ENCODE measurements at regions of chr17 and their contacts with region 1.

Region 1: GRCh38 chr17:55527540-55528118 is 16.4 kb upstream of the SMIM36 start:
- DNase-seq: peak in 2 of 4 experiments; percentile 29 to 57
- ATAC-seq: peak; percentile 86
- H3K4me3 ChIP-seq: no peak overlapping the region
- H3K27ac ChIP-seq: no peak overlapping the region
- H3K4me1 ChIP-seq: no peaks in the 10 kb centered on the region
- H3K27me3 ChIP-seq: no peaks in the 10 kb centered on the region
- CTCF ChIP-seq: peak; percentile 62 to 86 (median 66)
- EP300 ChIP-seq: no peak
- POLR2A ChIP-seq: no peak
- RAD21 ChIP-seq: peak; percentile 95

Region 2: DNA sequence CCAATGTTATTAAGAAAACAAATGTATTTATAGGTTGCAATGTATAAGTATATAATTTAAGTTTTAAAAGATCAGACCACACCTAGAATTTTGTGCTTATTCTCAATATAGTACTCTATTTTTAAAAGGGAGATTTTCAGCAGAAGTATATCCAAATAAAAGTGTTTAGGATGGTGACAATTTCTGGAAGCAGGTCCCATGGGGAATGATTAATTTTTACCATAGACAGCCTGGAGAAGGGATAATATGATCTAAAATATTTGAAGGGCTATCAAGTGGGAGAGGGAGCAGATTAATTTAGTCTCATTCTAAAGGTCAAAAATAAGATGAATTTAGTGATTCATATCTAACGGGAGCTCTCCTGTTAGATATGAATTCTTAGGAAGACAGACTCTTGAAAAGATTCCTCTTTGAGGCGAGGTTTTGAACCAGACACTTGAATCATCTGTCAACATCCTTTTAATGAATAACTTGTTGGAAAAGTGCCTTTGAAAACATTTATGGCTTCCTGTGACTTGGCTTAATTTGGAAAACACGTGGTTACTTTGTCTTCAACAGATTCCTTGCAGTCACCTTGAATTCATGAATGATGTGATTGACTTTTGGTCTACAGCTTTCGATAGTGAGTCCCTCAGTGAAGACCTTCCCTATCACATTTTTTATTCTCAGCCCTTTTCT is 12.9 kb after region 1 on chr17:
- CTCF ChIA-PET with region 1: no interaction called
- POLR2A ChIA-PET with region 1: no interaction called
- in situ Hi-C with region 1: no loop called
- intact Hi-C with region 1: no loop called
- DNase-seq: no peak
- ATAC-seq: no peak
- H3K4me3 ChIP-seq: no peak overlapping the region
- H3K27ac ChIP-seq: no peak overlapping the region
- H3K4me1 ChIP-seq: no peaks in the 10 kb centered on the region
- H3K27me3 ChIP-seq: no peaks in the 10 kb centered on the region
- CTCF ChIP-seq: no peak
- EP300 ChIP-seq: no peak
- POLR2A ChIP-seq: no peak
- RAD21 ChIP-seq: no peak

Region 3: DNA sequence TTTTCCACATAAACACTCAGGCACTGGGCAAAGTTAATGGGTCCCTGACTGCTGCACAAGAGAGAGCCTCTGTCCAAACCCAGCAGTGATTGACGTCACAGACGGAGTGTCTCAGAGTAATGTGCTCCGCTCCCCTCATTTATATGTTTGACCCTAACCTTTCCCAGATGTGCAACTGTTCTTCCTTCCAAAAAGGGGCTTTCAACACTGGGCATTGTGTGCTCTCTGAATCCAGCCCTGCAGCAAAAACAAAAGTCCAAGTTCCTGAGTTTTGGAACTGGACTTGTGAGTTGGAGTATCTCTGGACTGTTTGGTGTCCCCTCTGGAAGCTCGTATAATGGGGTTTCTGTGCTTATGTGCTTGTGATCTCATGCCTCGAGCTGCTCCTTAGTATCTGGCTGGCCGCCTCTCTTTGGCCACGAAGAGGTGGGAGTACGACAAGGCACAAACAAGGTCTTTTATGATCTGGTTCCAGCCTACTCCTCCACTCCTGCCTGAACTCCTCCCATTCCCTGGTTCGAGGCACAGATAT is 60.0 kb after region 1 on chr17:
- CTCF ChIA-PET with region 1: interaction called, 5 read pairs
- POLR2A ChIA-PET with region 1: no interaction called
- in situ Hi-C with region 1: no loop called
- intact Hi-C with region 1: loop called (anchors 1 kb)
- DNase-seq: no peak
- ATAC-seq: peak; percentile 62
- H3K4me3 ChIP-seq: no peak overlapping the region
- H3K27ac ChIP-seq: no peak overlapping the region
- H3K4me1 ChIP-seq: no peaks in the 10 kb centered on the region; a peak in 2 of 5 replicates
- H3K27me3 ChIP-seq: no peaks in the 10 kb centered on the region
- CTCF ChIP-seq: no peak
- EP300 ChIP-seq: no peak
- POLR2A ChIP-seq: no peak
- RAD21 ChIP-seq: no peak

Region 4: GRCh38 chr17:55641676-55642081 is 114.0 kb after region 1 on chr17:
- CTCF ChIA-PET with region 1: interaction called, 17 read pairs
- POLR2A ChIA-PET with region 1: interaction called, 3 read pairs
- in situ Hi-C with region 1: no loop called
- intact Hi-C with region 1: loop called (anchors 2 kb)
- DNase-seq: peak; percentile 17 to 70 (median 24)
- ATAC-seq: peak; percentile 92
- H3K4me3 ChIP-seq: no peak overlapping the region
- H3K27ac ChIP-seq: no peak overlapping the region
- H3K4me1 ChIP-seq: peaks cover 0 to 4% of the 10 kb centered on the region in 2 experiments; a peak in 2 of 5 replicates
- H3K27me3 ChIP-seq: no peaks in the 10 kb centered on the region
- CTCF ChIP-seq: peak; percentile 67 to 74 (median 72)
- EP300 ChIP-seq: no peak
- POLR2A ChIP-seq: no peak
- RAD21 ChIP-seq: peak; percentile 74 to 76

Region 5: DNA sequence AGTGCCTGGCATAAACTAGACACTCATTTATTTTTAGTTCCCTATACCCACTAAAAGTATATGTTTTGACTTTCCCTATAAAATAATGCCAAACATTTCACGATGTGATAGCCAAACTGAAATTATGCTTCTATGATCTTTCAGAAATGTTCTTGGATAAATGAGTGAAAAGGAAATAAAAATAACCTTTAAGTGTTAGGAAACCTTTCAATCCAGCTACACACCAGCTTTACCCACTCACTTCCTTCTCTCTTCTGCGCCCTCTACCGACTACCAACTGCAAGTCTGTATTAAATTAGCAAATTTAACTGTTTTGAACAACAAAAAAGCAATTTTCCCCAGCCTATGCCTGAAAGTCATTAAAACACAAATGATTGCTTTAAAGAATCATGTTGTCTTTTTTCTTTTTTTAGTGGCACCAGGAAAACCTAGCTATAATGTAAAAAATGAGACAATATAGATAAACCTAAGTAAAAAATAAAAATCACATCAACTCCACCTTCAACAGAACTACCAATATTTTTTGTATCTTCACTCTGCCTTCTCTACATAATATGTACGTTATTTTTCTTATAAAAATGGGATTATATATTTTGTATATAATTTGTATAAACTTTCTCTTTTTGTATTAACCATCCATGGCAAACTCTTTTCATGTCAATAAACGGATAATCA is 208.2 kb after region 1 on chr17:
- CTCF ChIA-PET with region 1: no interaction called
- POLR2A ChIA-PET with region 1: no interaction called
- in situ Hi-C with region 1: no loop called
- intact Hi-C with region 1: loop called (anchors 5 kb)
- DNase-seq: peak; percentile 27 to 83 (median 40)
- ATAC-seq: no peak
- H3K4me3 ChIP-seq: no peak overlapping the region
- H3K27ac ChIP-seq: no peak overlapping the region; the same call in 2 of the 3 replicates
- H3K4me1 ChIP-seq: peaks cover 25 to 63% of the 10 kb centered on the region in 2 experiments
- H3K27me3 ChIP-seq: no peaks in the 10 kb centered on the region
- CTCF ChIP-seq: peak; percentile 60 to 74 (median 70)
- EP300 ChIP-seq: no peak
- POLR2A ChIP-seq: no peak
- RAD21 ChIP-seq: peak; percentile 41 to 60

Region 6: GRCh38 chr17:55825213-55825612 is 297.6 kb after region 1 on chr17:
- CTCF ChIA-PET with region 1: interaction called, 22 read pairs
- POLR2A ChIA-PET with region 1: no interaction called
- in situ Hi-C with region 1: loop called (anchors 5 kb)
- intact Hi-C with region 1: loop called (anchors 1 kb)
- DNase-seq: peak in 3 of 4 experiments; percentile 22 to 53 (median 38)
- ATAC-seq: peak; percentile 82
- H3K4me3 ChIP-seq: no peak overlapping the region
- H3K27ac ChIP-seq: no peak overlapping the region
- H3K4me1 ChIP-seq: no peaks in the 10 kb centered on the region; a peak in 2 of 5 replicates
- H3K27me3 ChIP-seq: no peaks in the 10 kb centered on the region
- CTCF ChIP-seq: peak; percentile 56 to 84 (median 61); a peak in 5 of 6 replicates
- EP300 ChIP-seq: no peak
- POLR2A ChIP-seq: no peak
- RAD21 ChIP-seq: peak; percentile 79 to 91

Region 7: DNA sequence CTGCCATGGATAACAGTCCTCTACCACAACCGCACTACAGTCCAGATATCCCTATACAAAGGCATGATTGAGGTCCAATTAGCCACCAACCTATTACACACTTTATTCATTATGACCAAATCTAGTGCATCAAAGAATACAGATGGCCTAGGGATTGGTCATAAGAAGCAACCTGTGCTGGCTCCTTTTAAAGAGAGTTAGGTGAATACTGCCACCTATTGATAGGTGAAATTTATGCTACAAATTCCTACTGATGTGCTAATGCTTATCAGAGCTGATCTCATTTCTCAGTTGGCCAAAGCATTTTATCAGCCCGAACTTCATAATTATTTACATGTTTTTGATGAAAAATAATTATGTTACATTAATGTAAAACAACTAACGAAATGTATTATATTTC is 791.9 kb after region 1 on chr17:
- CTCF ChIA-PET with region 1: interaction called, 12 read pairs
- POLR2A ChIA-PET with region 1: no interaction called
- in situ Hi-C with region 1: loop called (anchors 25 kb)
- intact Hi-C with region 1: loop called (anchors 2 kb)
- DNase-seq: peak; percentile 16 to 31 (median 18)
- ATAC-seq: peak; percentile 72
- H3K4me3 ChIP-seq: no peak overlapping the region
- H3K27ac ChIP-seq: no peak overlapping the region
- H3K4me1 ChIP-seq: no peaks in the 10 kb centered on the region
- H3K27me3 ChIP-seq: no peaks in the 10 kb centered on the region
- CTCF ChIP-seq: peak in 2 of 3 experiments; percentile 49 to 66; a peak in 5 of 6 replicates
- EP300 ChIP-seq: no peak
- POLR2A ChIP-seq: no peak
- RAD21 ChIP-seq: peak; percentile 40 to 62; a peak in 3 of 4 replicates

Region 8: GRCh38 chr17:56478836-56479447 is 951.3 kb after region 1 on chr17:
- CTCF ChIA-PET with region 1: interaction called, 3 read pairs
- POLR2A ChIA-PET with region 1: no interaction called
- in situ Hi-C with region 1: loop called (anchors 5 kb)
- intact Hi-C with region 1: loop called (anchors 5 kb)
- DNase-seq: peak; percentile 11 to 28 (median 15)
- ATAC-seq: peak; percentile 66; the same call in 2 of the 3 replicates
- H3K4me3 ChIP-seq: no peak overlapping the region
- H3K27ac ChIP-seq: no peak overlapping the region
- H3K4me1 ChIP-seq: no peaks in the 10 kb centered on the region
- H3K27me3 ChIP-seq: no peaks in the 10 kb centered on the region
- CTCF ChIP-seq: peak; percentile 14 to 60 (median 58); a peak in 5 of 6 replicates
- EP300 ChIP-seq: no peak
- POLR2A ChIP-seq: no peak
- RAD21 ChIP-seq: peak; percentile 41 to 65

Measured in K562 (cell line).